ENCODE measurements at regions of chr1 and their contacts with region 1.

Region 1: GRCh38 chr1:23743287-23744052 is at the start of gene ELOA:
- DNase-seq: peak in 1 of 2 donors; percentile 78
- H3K4me3 ChIP-seq: peak within 1 kb of the TSS; percentile 74 to 98
- H3K27ac ChIP-seq: peak within 1 kb of the TSS; percentile 81 to 87
- H3K4me1 ChIP-seq: peaks cover 4 to 12% of the 10 kb centered on the region in 2 donors
- H3K27me3 ChIP-seq: no peaks in the 10 kb centered on the region
- CTCF ChIP-seq: no peak
- total RNA-seq, gene ELOA: 22.6 TPM

Region 2: DNA sequence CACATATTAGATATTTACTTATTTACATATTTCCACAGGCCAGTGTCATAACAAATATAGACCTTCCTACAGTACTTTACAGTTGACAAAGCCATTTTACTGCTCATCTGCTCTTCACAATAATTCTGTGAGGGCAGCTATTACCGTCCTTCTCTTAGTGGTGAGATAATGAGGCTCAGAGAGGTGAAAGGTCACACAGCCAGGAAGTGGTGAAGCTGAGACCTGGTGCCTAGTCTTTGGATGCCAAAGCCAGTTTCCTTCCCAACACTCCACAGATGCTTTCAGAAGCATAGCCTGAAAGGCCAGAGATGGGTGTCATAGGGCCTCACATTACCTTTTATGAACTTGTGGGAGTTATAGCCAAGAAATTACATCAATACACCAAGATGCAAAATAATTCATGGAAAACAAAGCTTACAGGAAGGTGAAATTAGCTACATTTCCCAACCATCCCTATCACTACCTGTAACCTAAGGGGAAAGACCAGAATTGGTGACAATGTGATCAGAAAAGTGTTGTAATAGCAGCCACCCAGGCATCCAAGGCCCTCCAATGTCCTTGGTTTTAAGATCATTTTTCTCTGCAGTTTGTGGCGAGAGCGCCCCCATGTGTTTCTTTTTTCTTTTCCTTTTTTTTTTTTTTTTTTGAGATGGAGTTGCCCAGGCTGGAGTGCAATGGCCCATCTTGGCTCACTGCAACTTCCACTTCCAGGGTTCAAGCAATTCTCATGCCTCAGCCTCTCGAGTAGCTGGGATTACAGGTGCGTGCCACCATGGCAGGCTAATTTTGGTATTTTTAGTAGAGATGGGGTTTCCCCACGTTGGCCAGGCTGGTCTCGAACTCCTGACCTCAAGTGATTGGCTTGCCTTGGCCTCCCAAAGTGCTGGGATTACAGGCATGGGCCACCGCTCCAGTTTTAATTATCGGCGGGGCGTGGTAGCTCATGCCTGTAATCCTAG is 78.4 kb before region 1 on chr1:
- intact Hi-C with region 1: no loop called
- DNase-seq: no peak
- H3K4me3 ChIP-seq: no peak overlapping the region
- H3K27ac ChIP-seq: no peak overlapping the region
- H3K4me1 ChIP-seq: no peaks in the 10 kb centered on the region
- H3K27me3 ChIP-seq: no peaks in the 10 kb centered on the region
- CTCF ChIP-seq: peak in 1 of 3 experiments; percentile 14

Region 3: DNA sequence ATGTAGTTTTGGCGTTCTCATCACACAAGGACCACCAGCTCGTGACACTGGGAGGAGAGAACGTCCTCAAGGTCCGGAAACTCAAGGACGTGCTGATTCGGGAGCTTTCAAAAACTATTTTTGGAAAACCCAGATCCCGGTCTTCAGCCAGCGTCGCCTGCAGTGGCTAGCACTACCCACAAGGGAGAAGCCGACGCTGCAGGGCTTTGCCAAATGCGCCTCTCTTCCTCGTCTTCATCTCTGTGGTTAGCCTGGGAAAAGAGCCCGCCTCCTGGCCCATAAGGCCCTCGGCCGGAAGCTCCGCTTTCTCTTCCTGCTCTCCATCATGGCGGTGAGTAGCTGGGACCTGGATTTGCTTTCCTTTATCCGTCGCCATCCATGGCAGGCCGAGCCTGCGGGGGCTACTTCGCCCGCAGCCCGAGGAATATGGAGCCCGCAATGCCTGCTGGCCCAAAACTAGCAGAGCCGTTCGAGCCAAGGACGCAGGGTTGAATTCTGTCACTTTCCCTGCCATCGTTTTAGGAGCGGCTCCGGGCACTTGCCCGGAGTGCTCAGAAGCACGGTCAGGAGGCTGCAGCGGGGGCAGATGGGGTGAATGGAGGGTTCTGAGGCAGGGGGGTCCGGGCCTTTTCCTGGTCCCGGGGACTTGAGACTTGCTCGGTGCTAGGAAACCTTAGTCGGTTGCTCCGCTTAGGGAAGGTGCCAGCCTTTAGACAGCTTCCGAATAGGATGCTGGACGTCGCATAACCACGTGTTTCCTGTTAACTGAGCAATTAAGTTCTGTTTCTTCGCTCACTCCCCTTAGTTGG is 51.8 kb before region 1 on chr1 and contains the start of gene RPL11:
- intact Hi-C with region 1: loop called (anchors 5 kb)
- DNase-seq: peak; percentile 65 to 96
- H3K4me3 ChIP-seq: peak within 1 kb of the TSS; percentile 74 to 82
- H3K27ac ChIP-seq: peak within 1 kb of the TSS; percentile 80 to 88
- H3K4me1 ChIP-seq: peaks cover 8 to 17% of the 10 kb centered on the region in 2 donors
- H3K27me3 ChIP-seq: no peaks in the 10 kb centered on the region
- CTCF ChIP-seq: peak; percentile 76 to 88 (median 84)
- total RNA-seq, gene RPL11: 462 TPM

Region 4: GRCh38 chr1:23889074-23889473 is 145.6 kb after region 1 on chr1:
- intact Hi-C with region 1: no loop called
- DNase-seq: no peak
- H3K4me3 ChIP-seq: no peak overlapping the region
- H3K27ac ChIP-seq: no peak overlapping the region
- H3K4me1 ChIP-seq: no peaks in the 10 kb centered on the region
- H3K27me3 ChIP-seq: no peaks in the 10 kb centered on the region
- CTCF ChIP-seq: no peak

Measured in ascending aorta (tissue), 2 donors.